Endothelial cell of umbilical vein (primary cell): ENCODE measurements at regions of chr10 and their contacts with region 1.

Region 1: DNA sequence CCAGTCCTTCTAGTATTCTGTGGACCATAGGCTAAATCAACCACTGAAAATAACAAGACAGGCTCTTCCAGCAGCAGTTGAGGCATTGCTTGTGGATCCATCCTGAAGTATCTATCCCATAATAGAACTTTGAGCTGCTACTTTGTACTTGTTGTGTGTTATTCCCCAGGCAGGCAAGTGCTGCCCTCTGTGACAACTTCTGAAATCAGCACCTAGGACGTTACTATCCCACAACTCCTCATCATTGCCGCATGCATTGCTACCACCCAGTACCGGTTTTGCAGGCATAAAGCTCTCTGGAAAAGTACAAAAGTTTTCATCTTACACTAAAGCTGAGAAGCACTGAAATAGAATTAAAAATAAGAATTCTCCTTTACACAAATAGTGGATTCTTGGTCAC is 145.3 kb downstream of the HTR7 start:
- DNase-seq: no peak
- H3K4me3 ChIP-seq: no peak overlapping the region
- H3K27ac ChIP-seq: no peak overlapping the region
- H3K4me1 ChIP-seq: no peaks in the 10 kb centered on the region
- H3K27me3 ChIP-seq: peaks cover 0 to 3% of the 10 kb centered on the region in 2 experiments
- CTCF ChIP-seq: no peak
- POLR2A ChIP-seq: no peak

Region 2: DNA sequence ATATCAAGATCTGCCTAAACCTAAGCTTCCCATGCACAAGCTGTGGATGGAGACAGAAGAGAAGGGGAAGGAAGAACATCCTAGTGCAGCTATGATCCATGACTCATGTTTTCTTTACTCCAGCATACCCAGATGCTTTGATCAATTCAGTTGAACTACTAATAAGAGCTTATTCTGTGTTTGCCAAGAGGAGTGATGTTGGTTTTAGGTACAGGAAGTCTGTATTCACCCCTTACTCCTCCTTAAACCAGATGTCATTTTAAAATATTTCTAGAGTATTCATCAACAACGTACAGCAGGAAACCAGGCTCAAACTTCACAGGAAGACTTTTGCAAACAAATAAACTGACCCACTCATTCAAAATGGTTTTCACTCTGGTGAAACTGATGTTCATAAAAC is 1096.7 kb before region 1 on chr10:
- CTCF ChIA-PET with region 1: no interaction called
- POLR2A ChIA-PET with region 1: no interaction called
- dilution Hi-C with region 1: no loop called
- intact Hi-C with region 1: loop called (anchors 5 kb)
- DNase-seq: peak; percentile 39
- H3K4me3 ChIP-seq: no peak overlapping the region
- H3K27ac ChIP-seq: no peak overlapping the region
- H3K4me1 ChIP-seq: peaks cover 10% of the 10 kb centered on the region
- H3K27me3 ChIP-seq: no peaks in the 10 kb centered on the region
- CTCF ChIP-seq: no peak
- POLR2A ChIP-seq: no peak

Region 3: DNA sequence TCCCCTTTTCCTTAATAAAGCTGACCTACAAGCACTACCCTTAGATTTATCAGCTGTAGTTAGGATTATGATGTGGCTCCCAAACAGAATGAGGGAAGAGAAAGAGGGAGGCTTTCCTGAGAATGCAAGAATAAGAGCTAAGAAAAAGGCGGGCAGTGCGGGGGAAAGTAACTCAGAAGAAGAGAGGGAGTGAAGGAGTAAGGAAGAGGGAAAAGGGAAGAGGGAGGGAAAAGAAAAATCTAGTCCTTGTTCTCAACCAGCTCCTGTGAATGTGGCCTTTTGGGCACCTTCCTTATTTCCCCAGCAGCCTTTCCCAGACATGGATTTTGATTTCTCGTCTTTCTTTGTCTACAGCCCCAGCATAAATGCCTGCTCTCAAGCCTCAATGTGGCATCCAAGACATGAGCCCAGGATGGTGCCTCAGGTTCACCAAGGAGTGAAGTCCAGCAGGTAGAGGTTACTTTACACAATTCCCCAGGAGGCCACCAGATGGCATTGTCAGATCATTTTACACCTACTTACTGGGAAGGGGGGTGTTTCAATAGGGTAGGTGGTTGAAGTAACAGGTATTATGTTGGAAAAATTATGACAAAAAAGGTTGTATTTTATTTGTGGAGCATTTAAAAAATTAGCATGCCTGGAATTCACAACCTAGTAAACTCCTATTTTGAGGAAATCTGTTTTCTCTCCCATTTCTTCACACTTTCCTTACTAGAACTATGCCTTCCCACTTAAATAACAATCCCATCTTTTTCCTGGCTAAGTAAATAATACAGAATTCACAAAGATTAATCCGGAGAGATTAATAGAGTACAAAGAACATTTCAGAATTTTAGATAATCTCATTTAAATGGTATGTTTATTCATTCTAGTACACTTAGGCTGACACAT is 38.8 kb after region 1 on chr10:
- CTCF ChIA-PET with region 1: no interaction called
- POLR2A ChIA-PET with region 1: no interaction called
- dilution Hi-C with region 1: no loop called
- intact Hi-C with region 1: no loop called
- DNase-seq: peak; percentile 58
- H3K4me3 ChIP-seq: no peak overlapping the region
- H3K27ac ChIP-seq: no peak overlapping the region
- H3K4me1 ChIP-seq: no peaks in the 10 kb centered on the region
- H3K27me3 ChIP-seq: peaks cover 4 to 11% of the 10 kb centered on the region in 2 experiments
- CTCF ChIP-seq: peak; percentile 63 to 66
- POLR2A ChIP-seq: no peak

Region 4: GRCh38 chr10:90935581-90936275 is 223.2 kb after region 1 on chr10:
- CTCF ChIA-PET with region 1: no interaction called
- POLR2A ChIA-PET with region 1: no interaction called
- dilution Hi-C with region 1: no loop called
- intact Hi-C with region 1: no loop called
- DNase-seq: peak; percentile 36
- H3K4me3 ChIP-seq: no peak overlapping the region
- H3K27ac ChIP-seq: no peak overlapping the region
- H3K4me1 ChIP-seq: peaks cover 53% of the 10 kb centered on the region
- H3K27me3 ChIP-seq: no peaks in the 10 kb centered on the region
- CTCF ChIP-seq: no peak
- POLR2A ChIP-seq: no peak